ENCODE measurements at regions of chr3 and their contacts with region 1.

Region 1: GRCh38 chr3:11060500-11061251 is 68.1 kb downstream of the SLC6A1 start:
- DNase-seq: peak; percentile 12
- ATAC-seq: peak; percentile 92
- H3K4me3 ChIP-seq: no peak overlapping the region
- H3K27ac ChIP-seq: no peak overlapping the region
- H3K4me1 ChIP-seq: no peaks in the 10 kb centered on the region
- H3K27me3 ChIP-seq: peaks cover 0 to 10% of the 10 kb centered on the region in 2 experiments; a peak in 3 of 5 replicates
- CTCF ChIP-seq: peak; percentile 87
- EP300 ChIP-seq: no peak
- POLR2A ChIP-seq: no peak
- RAD21 ChIP-seq: peak; percentile 50

Region 2: GRCh38 chr3:10945683-10946287 is 114.9 kb before region 1 on chr3:
- CTCF ChIA-PET with region 1: interaction called, 17 read pairs
- POLR2A ChIA-PET with region 1: no interaction called
- in situ Hi-C with region 1: loop called (anchors 5 kb)
- intact Hi-C with region 1: loop called (anchors 1 kb)
- DNase-seq: peak; percentile 47
- ATAC-seq: peak; percentile 95
- H3K4me3 ChIP-seq: no peak overlapping the region
- H3K27ac ChIP-seq: no peak overlapping the region
- H3K4me1 ChIP-seq: no peaks in the 10 kb centered on the region
- H3K27me3 ChIP-seq: peaks cover 4 to 18% of the 10 kb centered on the region in 2 experiments; a peak in 3 of 5 replicates
- CTCF ChIP-seq: peak; percentile 93
- EP300 ChIP-seq: no peak
- POLR2A ChIP-seq: no peak
- RAD21 ChIP-seq: peak; percentile 74

Region 3: GRCh38 chr3:11037241-11037873 is 23.3 kb before region 1 on chr3:
- CTCF ChIA-PET with region 1: no interaction called
- POLR2A ChIA-PET with region 1: no interaction called
- in situ Hi-C with region 1: no loop called
- intact Hi-C with region 1: no loop called
- DNase-seq: no peak
- ATAC-seq: peak; percentile 77
- H3K4me3 ChIP-seq: no peak overlapping the region
- H3K27ac ChIP-seq: no peak overlapping the region
- H3K4me1 ChIP-seq: no peaks in the 10 kb centered on the region
- H3K27me3 ChIP-seq: peaks cover 0 to 22% of the 10 kb centered on the region in 2 experiments; a peak in 2 of 5 replicates
- CTCF ChIP-seq: no peak
- EP300 ChIP-seq: no peak
- POLR2A ChIP-seq: no peak
- RAD21 ChIP-seq: no peak

Measured in HepG2 (cell line).